ENCODE measurements at regions of chr4 and their contacts with region 1.

Region 1: DNA sequence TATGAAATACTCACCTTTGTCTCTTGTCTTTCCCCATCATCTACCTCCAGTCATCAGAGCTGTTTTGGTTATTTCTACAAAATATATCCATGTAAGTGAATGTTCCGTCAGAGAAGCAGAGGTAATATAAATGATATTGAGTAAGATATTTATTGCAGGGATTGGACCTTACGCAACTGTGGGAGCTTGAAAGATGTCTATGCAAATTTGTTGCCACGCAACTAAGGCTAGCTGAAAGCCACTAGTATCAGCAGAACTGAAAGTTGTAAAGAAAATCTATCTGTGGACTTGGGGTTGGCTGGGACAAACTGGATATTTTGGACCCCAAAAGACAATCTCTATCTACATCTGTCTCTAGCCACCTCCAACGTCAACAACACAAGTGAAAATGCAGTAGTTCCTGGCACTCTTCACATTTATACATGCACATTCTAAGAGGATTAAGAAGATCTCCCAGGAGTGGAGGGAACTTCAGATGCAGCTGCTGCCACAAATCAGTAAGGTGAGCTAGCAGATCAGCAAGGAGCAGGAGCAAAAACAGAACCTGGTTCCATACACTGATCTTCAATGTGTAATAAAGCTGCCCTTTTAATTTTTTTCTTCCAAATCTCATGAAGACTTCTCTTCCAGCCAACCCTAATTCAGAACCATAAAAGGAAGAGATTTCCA is 8.5 kb upstream of the CCSER1 start:
- DNase-seq: no peak
- ATAC-seq: no peak

Region 2: DNA sequence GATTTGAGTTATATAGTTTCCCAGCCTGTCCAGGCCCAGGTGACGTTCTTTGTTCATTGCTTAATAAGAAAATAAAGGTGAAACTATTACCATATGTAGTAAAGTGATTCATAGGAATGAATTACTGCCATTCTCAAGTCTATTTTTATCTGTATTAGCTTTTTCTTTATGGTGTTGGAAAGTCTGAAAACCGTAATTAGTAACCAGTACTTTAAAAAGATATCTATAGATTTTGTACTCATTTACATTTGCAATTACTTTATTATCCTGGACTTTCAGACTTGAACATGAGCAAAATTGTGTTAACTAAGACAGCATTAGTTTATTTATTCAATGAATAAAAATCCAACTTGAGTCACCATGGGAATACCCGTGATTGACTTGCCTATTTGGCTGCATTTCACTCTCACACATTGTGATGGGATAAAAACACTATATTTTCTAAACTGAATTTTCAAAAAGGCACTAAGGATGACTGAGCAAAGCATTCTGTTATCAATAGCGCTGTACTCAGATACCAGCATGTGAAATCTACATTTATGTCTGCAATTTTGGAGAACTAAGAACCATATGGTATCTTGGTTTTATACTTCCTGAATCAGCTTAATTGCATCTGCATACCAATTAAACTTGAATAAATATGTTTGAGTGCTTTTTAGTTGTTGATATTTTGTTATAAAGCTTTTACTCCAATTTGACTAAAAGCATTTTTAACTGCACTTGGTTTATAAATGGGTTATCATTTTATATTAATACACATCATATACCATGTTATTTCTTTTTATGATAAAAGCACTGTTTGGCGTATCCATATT is 163.1 kb after region 1 on chr4:
- intact Hi-C with region 1: loop called in 1 of 2 experiments (anchors 10 kb)
- DNase-seq: no peak
- ATAC-seq: no peak

Measured in left cardiac atrium (tissue), 4 donors.